ENCODE measurements at regions of chr14 and their contacts with region 1.

Region 1: GRCh38 chr14:59126710-59127432 is 61.6 kb upstream of the DAAM1 start:
- DNase-seq: peak; percentile 75
- H3K4me3 Mint-ChIP-seq: no peak overlapping the region
- H3K27ac Mint-ChIP-seq: no peak overlapping the region
- H3K4me1 Mint-ChIP-seq: no peaks in the 10 kb centered on the region
- H3K27me3 Mint-ChIP-seq: peaks cover 12% of the 10 kb centered on the region
- CTCF ChIP-seq: peak; percentile 61

Region 2: DNA sequence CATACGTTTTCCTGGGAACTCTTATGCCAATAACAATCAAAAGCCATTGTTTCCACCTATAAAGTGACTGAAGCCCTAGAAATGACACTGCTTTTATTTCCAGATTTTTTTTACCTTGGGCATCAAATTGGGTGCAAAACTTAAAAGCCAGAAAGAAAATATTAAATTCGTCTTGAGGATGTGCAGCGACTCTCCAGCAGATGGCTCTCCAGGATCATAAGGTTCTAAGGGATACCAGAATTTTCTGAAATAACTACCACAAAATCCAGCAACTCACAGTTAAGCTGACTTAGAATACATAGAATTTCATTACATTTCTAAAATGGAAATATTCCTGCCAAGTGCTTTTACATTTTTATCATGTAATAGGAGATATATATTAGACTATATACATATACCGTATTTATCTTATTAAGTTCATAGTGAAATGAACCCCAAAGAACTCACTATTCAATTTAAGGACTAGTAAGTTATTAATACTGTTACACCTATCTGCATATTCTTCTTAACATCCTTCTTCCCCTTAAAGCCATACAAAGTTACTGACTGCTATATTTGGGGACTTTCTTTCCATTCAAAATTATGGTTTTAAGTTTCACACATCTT is 1018.8 kb before region 1 on chr14:
- CTCF ChIA-PET with region 1: no interaction called
- POLR2A ChIA-PET with region 1: no interaction called
- intact Hi-C with region 1: loop called (anchors 5 kb)
- DNase-seq: peak; percentile 56
- H3K4me3 Mint-ChIP-seq: no peak overlapping the region
- H3K27ac Mint-ChIP-seq: no peak overlapping the region
- H3K4me1 Mint-ChIP-seq: peaks cover 7% of the 10 kb centered on the region
- H3K27me3 Mint-ChIP-seq: peaks cover 92% of the 10 kb centered on the region
- CTCF ChIP-seq: peak; percentile 81

Region 3: DNA sequence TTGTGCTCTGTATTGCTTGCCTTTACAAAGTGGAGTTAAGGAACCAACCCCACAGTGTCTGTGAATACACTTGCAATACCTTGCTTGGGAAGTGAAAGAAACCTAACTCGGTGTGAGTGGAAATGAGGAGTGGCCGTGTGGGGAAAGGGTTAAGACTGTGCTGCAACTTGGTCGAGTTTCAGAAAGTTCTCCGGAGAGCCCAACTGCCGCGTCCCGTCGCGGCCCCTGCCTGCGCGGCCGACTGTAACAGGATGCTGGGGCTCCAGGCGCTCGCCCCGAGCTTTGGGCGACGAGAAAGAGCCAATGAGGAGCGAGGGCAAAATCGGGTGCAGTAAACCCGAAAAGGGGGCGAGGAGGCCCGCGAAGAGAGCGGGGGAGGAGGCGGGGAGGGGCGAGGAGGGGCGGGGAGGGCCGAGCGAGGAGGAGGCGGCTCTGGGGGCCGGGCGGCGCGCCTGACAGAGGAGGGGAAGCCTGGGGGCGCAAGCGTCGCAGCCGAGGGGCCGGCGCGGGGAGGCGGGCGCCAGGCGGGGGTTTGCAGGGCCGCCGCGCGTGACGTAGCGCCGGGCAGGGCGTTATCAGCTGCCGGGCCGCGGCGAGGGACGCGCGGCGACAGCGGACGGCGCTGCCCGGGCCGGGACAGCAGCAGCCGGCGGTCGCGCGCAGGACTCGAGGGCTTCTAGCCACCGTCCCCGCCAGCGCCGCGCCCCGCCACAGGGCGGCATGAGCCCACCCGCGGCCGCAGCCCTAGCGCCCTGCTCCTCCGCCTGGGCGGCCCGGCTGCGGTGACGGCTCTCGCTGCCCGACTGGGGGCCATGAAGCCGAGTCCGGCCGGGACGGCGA is 489.3 kb before region 1 on chr14 and contains the start of gene DACT1:
- CTCF ChIA-PET with region 1: interaction called, 32 read pairs
- POLR2A ChIA-PET with region 1: no interaction called
- intact Hi-C with region 1: loop called (anchors 1 kb)
- DNase-seq: no peak
- H3K4me3 Mint-ChIP-seq: no peak within 1 kb of the TSS
- H3K27ac Mint-ChIP-seq: no peak within 1 kb of the TSS
- H3K4me1 Mint-ChIP-seq: no peaks in the 10 kb centered on the region
- H3K27me3 Mint-ChIP-seq: peaks cover 66% of the 10 kb centered on the region
- CTCF ChIP-seq: no peak
- total RNA-seq, gene DACT1: not detected in 2 replicates

Region 4: DNA sequence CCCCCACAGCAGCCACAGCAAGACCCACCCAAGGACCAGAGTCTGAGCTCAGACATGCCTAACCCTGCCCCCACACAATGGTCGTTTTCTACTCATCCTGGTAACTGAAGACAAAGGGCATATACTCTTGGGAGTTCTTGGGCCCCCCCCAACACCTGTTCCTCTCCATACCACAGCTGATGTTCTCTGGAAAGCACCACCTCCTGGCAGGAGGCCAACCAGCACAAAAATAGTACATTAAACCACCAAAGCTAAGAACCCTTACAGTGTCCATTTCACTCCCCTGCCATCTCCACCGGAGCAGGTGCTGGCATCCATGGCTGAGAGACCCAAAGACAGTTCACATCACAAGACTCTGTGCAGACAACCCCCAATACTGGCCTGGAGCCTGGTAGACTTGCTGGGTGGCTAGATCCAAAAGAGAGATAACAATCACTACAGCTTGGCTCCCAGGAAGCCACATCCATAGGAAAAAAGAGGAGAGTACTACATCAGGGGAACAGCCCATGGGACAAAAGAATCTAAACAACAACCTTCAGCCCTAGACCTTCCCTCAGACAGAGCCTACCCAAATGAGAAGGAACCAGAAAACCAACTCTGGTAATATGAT is 18.9 kb before region 1 on chr14:
- CTCF ChIA-PET with region 1: interaction called, 17 read pairs
- POLR2A ChIA-PET with region 1: no interaction called
- intact Hi-C with region 1: no loop called
- DNase-seq: no peak
- H3K4me3 Mint-ChIP-seq: no peak overlapping the region
- H3K27ac Mint-ChIP-seq: no peak overlapping the region
- H3K4me1 Mint-ChIP-seq: peaks cover 7% of the 10 kb centered on the region
- H3K27me3 Mint-ChIP-seq: peaks cover 69% of the 10 kb centered on the region
- CTCF ChIP-seq: no peak

Region 5: GRCh38 chr14:59422069-59422881 is 295.4 kb after region 1 on chr14:
- CTCF ChIA-PET with region 1: interaction called, 6 read pairs
- POLR2A ChIA-PET with region 1: no interaction called
- intact Hi-C with region 1: loop called (anchors 1 kb)
- DNase-seq: no peak
- H3K4me3 Mint-ChIP-seq: no peak overlapping the region
- H3K27ac Mint-ChIP-seq: no peak overlapping the region
- H3K4me1 Mint-ChIP-seq: no peaks in the 10 kb centered on the region
- H3K27me3 Mint-ChIP-seq: no peaks in the 10 kb centered on the region
- CTCF ChIP-seq: peak; percentile 29

Region 6: GRCh38 chr14:59454131-59454530 is 327.3 kb after region 1 on chr14:
- CTCF ChIA-PET with region 1: interaction called, 13 read pairs
- POLR2A ChIA-PET with region 1: interaction called, 4 read pairs
- intact Hi-C with region 1: no loop called
- DNase-seq: peak; percentile 64
- H3K4me3 Mint-ChIP-seq: no peak overlapping the region
- H3K27ac Mint-ChIP-seq: no peak overlapping the region
- H3K4me1 Mint-ChIP-seq: no peaks in the 10 kb centered on the region
- H3K27me3 Mint-ChIP-seq: no peaks in the 10 kb centered on the region
- CTCF ChIP-seq: no peak

Measured in MCF 10A (cell line).